Right ventricle myocardium superior (tissue), 1 donor: ENCODE measurements at regions of chr7 and their contacts with region 1.

Region 1: GRCh38 chr7:151631968-151632749 is 112.5 kb upstream of the RHEB start:
- DNase-seq: peak; percentile 89
- ATAC-seq: peak; percentile 88

Region 2: DNA sequence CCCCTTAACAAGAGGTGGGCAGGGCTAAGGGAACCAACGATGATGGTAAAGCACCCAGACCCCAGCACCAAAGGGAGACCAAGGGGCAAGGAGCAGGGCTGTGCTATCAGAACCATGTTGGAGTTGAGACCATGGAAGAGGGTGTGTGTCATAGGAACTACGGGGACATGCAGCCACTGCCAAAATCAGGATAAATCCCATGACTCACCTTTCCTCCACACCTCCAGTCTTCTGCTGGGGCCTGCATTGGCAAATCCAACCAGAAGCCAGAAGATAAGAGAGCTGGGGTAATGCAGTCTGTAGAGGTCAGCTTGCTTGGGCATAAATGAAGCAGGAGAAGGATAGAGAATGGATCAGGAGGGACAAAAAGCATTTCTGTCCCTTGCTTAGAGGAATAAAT is 341.0 kb before region 1 on chr7:
- intact Hi-C with region 1: no loop called
- DNase-seq: no peak
- ATAC-seq: no peak

Region 3: GRCh38 chr7:151472644-151473380 is 159.3 kb before region 1 on chr7:
- intact Hi-C with region 1: no loop called
- DNase-seq: no peak
- ATAC-seq: peak; percentile 78

Region 4: DNA sequence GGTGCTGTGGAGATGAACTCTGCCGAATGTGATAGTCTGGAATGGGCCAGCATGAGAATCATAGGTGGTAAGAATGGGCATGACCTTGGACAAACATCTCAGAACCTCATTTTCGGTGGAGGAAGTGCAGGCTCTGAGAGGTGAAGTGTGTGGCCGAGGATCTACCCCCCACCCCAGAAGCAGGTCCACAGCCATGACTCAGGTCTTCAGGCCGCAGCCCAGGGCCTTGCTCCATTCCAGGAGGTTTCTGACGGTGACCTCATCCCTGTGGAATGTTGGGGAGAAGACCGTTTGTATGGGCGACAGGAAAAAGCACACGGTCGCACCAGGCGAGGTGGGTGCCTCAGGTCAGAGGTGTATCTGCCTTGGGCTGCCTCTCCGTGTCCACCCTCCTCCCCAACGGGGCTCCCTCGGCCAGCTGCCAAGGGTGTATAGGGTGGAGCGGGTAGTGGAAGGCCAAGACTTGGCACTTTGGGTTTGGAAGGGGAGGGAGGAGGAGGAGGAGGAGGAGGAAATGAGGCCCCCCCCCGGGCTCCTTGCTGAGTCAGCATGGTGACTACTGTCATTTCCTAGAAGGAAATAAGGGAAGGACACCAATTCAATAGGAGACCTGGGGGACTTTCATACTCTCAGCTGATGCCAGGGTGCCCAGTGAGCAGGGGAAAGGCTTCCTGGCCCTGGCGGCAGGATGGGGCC is 55.5 kb after region 1 on chr7:
- intact Hi-C with region 1: loop called (anchors 5 kb)
- DNase-seq: peak; percentile 55
- ATAC-seq: peak; percentile 45